Activated CD8-positive, alpha-beta T cell treated with anti-CD3 and anti-CD28 coated beads, Interleukin-2, amount 10 ng/mL, durations not matched to agents 7 days and 5 days (primary cell): ENCODE measurements at regions of chrX and their contacts with region 1.

Region 1: GRCh38 chrX:37926700-37927099 is 79.3 kb upstream of the DYNLT3 start:
- DNase-seq: no peak
- ATAC-seq: no peak
- H3K4me3 Mint-ChIP-seq: no peak overlapping the region
- H3K27ac Mint-ChIP-seq: no peak overlapping the region
- H3K4me1 Mint-ChIP-seq: no peaks in the 10 kb centered on the region
- H3K27me3 Mint-ChIP-seq: no peaks in the 10 kb centered on the region

Region 2: DNA sequence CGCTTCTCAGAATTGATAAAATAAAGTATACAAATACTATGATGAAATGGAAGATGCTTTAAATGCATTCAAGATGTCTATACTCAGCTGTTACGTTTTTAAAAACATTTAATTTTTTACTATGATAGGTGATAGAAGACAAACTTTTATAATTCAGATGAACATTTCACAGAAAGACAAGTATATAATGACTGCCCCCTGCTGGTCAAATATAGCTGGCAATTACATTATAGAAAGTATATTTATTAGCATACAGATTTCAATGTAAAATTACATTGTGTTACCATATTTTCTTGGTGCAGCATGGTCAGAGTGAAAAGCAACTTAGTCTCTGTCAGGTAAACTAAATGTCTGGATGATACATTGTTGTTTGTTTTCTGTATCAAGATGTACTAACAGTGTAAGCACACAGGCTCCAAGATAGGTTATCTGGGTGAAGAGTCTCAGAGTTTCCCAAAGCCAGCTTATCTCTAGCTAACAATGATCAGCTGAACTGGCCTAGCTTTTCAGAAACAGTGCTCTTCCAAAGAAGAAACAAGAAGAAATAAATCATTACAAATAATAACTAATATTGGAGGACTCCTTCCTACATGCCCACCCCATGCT is 239.9 kb after region 1 on chrX:
- CTCF ChIA-PET with region 1: interaction called, 25 read pairs
- POLR2A ChIA-PET with region 1: no interaction called
- DNase-seq: peak; percentile 27
- ATAC-seq: no peak
- H3K4me3 Mint-ChIP-seq: no peak overlapping the region
- H3K27ac Mint-ChIP-seq: no peak overlapping the region
- H3K4me1 Mint-ChIP-seq: no peaks in the 10 kb centered on the region
- H3K27me3 Mint-ChIP-seq: peaks cover 4% of the 10 kb centered on the region

Region 3: GRCh38 chrX:38318196-38318595 is 391.5 kb after region 1 on chrX:
- CTCF ChIA-PET with region 1: no interaction called
- POLR2A ChIA-PET with region 1: no interaction called
- DNase-seq: no peak
- ATAC-seq: no peak
- H3K4me3 Mint-ChIP-seq: no peak overlapping the region
- H3K27ac Mint-ChIP-seq: no peak overlapping the region
- H3K4me1 Mint-ChIP-seq: no peaks in the 10 kb centered on the region
- H3K27me3 Mint-ChIP-seq: no peaks in the 10 kb centered on the region